ENCODE measurements at regions of chr2 and their contacts with region 1.

Region 1: GRCh38 chr2:174522553-174522952 is 35.7 kb upstream of the GPR155 start:
- DNase-seq: peak in 8 of 42 donors; percentile 7 to 51 (median 18)

Region 2: DNA sequence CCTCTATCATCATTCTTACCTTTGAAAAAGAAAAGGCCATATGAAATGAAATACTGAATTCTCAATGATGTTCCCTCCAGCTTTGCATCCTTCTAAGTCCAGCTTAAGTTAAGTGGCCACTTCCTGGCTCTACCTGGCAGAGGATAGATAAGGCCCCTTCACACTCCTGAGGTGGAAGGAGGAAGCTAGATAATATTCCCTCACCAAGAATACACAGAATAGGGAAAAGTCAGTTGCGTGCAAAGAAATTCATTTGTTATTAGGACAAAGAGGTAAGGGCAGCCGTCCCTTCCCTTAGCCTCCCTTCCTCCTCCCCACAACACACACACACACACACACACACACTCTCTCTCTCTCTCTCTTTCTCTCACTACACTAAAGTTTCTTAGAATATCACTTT is 311.7 kb before region 1 on chr2:
- intact Hi-C with region 1: no loop called
- DNase-seq: no peak

Region 3: DNA sequence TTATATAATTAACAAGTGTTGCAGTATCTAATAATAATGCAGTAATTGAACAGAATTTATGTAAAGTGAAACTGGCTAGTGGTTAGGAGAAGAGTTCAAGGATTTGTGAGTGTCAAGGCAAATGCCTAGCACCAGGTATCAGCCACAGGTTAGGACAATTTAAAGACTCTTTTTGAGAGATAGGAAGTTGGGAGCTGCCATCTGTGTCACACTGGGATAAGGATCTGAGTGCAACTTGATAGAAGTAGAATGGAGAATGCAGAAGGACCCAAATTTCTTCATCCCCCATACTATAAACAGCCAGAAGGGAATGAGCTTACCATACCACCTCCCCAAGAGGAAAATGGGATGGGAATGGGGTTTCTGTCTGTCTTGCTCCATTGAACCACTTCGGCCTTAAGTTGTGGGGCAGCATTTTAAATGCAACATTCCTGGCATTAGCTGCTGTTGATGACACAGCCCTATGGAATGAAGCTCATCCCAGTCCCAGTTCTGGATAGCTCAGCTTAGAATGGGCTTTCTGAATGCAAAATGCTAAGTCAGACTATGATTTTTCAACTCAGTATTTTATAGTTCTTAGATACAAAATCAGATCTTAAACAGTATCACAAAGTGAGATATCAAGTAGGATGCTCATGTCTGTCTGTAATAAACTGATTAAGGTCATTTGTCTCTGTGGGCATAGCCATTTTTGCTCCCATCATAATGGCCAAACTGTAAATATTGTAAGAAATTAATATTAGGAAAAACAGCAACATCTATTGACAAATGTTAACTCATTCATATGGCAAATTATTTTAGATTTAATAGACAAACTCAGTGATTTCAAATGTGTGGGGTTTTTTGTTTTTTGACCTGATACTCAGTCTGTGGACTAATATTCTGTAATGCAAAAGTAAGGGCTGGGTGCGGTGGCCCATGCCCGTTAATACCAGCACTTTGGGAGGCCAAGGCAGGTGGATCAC is 79.7 kb before region 1 on chr2:
- intact Hi-C with region 1: no loop called
- DNase-seq: no peak

Region 4: GRCh38 chr2:174465327-174465726 is 57.2 kb before region 1 on chr2:
- intact Hi-C with region 1: loop called (anchors 10 kb)
- DNase-seq: peak in 1 of 42 donors; percentile 7

Measured in head of caudate nucleus (tissue), 42 donors.